ENCODE measurements at regions of chr11 and their contacts with region 1.

Region 1: GRCh38 chr11:4626207-4627099 is 10.8 kb upstream of the OR51D1 start:
- DNase-seq: peak; percentile 73 to 83
- H3K4me3 ChIP-seq: no peak overlapping the region
- H3K4me3 Mint-ChIP-seq: no peak overlapping the region
- H3K27ac Mint-ChIP-seq: no peak overlapping the region
- H3K4me1 ChIP-seq: no peaks in the 10 kb centered on the region
- H3K4me1 Mint-ChIP-seq: peaks cover 6% of the 10 kb centered on the region
- H3K27me3 ChIP-seq: no peaks in the 10 kb centered on the region; the same call in 1 of the 2 replicates
- H3K27me3 Mint-ChIP-seq: peaks cover 13% of the 10 kb centered on the region
- CTCF ChIP-seq: peak; percentile 73 to 79

Region 2: DNA sequence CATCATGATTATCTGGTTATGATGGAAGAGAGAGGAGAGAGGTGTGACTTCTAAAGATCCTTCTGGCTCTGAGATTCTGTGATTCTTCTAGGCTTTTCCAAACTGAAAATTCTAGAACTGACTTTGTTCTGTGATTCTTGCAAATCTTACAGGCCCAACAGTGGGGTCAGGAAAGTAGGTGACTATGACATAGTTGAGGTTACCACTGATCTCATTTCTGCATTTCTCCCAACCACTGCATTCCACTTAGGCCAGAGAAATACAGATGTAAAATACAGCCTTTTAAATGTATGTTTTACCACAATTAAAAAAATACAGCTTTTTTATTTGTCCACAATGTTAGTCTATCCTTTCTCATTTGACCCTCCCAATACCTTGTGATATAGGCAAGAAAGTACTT is 687.2 kb before region 1 on chr11:
- CTCF ChIA-PET with region 1: no interaction called
- POLR2A ChIA-PET with region 1: no interaction called
- intact Hi-C with region 1: no loop called
- DNase-seq: no peak
- H3K4me3 ChIP-seq: no peak overlapping the region
- H3K4me3 Mint-ChIP-seq: no peak overlapping the region
- H3K27ac Mint-ChIP-seq: no peak overlapping the region
- H3K4me1 ChIP-seq: peaks cover 16% of the 10 kb centered on the region
- H3K4me1 Mint-ChIP-seq: peaks cover 7% of the 10 kb centered on the region
- H3K27me3 ChIP-seq: no peaks in the 10 kb centered on the region
- H3K27me3 Mint-ChIP-seq: no peaks in the 10 kb centered on the region
- CTCF ChIP-seq: no peak

Region 3: DNA sequence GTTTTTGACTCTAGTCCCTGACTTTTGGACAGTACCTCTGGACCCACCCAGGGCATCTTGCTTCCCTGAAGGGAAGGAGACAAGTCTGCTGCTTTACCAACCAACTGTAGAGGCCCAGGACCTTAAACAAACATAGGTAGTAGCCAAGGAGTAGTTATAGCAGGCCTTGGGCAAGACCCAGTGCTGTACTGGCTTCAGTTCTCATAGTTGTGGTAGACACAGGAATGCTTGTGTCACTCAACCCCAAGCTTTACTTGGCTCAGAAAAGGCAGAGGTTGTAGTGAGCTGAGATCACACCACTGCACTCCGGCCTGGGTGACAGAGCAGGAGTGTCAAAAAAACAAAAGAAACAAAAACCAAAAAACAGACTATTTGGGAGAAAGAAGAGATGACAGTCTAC is 102.8 kb before region 1 on chr11:
- CTCF ChIA-PET with region 1: no interaction called
- POLR2A ChIA-PET with region 1: no interaction called
- intact Hi-C with region 1: no loop called
- DNase-seq: no peak
- H3K4me3 ChIP-seq: no peak overlapping the region
- H3K4me3 Mint-ChIP-seq: no peak overlapping the region
- H3K27ac Mint-ChIP-seq: no peak overlapping the region
- H3K4me1 ChIP-seq: no peaks in the 10 kb centered on the region
- H3K4me1 Mint-ChIP-seq: no peaks in the 10 kb centered on the region
- H3K27me3 ChIP-seq: no peaks in the 10 kb centered on the region
- H3K27me3 Mint-ChIP-seq: peaks cover 14% of the 10 kb centered on the region
- CTCF ChIP-seq: no peak

Region 4: GRCh38 chr11:4826425-4826824 is 200.0 kb after region 1 on chr11:
- CTCF ChIA-PET with region 1: no interaction called
- POLR2A ChIA-PET with region 1: no interaction called
- intact Hi-C with region 1: loop called (anchors 2 kb)
- DNase-seq: peak in 1 of 2 experiments; percentile 4
- H3K4me3 ChIP-seq: no peak overlapping the region
- H3K4me3 Mint-ChIP-seq: no peak overlapping the region
- H3K27ac Mint-ChIP-seq: no peak overlapping the region
- H3K4me1 ChIP-seq: no peaks in the 10 kb centered on the region
- H3K4me1 Mint-ChIP-seq: no peaks in the 10 kb centered on the region
- H3K27me3 ChIP-seq: no peaks in the 10 kb centered on the region; the same call in 1 of the 2 replicates
- H3K27me3 Mint-ChIP-seq: peaks cover under 1% of the 10 kb centered on the region
- CTCF ChIP-seq: peak; percentile 15 to 24

Region 5: DNA sequence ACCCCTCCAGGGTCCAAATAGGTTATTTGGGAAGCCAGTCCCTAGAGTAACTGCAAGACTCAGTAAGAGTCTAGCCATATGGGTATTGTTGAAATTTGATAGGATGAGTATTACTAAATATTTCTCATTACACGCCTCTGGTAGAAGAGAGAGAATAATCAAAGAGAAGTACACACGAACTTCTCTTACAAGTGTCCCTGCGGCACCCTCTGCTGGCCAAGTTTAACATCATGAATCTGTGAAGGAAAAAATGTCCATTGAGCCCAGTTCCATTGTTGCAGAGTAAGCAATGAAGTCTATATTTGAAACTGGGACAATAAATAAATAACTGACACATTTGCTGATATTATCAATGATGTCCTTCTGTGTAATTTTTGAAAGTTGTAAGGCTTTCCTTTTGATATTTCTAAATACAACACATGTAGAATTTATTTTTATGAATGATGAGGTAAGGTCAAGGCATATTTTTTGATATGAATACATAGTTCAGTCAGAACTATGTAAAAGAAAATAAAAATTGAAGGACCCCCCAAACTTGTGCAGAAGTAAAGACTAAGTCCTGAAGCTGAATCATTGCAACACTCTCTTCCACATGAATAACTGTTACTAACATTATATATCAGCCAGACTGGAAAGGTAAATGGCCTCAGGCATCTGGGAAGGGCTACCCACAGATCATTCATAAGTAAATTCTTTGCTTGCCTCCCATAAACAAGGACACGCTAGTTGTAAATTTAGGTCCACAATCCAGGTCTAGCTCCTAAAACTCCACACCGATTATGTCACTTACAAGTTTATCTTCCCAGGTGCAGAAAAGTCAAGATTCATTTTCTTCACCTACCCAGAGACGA is 378.2 kb after region 1 on chr11:
- CTCF ChIA-PET with region 1: no interaction called
- POLR2A ChIA-PET with region 1: no interaction called
- intact Hi-C with region 1: loop called (anchors 1 kb)
- DNase-seq: peak in 1 of 2 experiments; percentile 58
- H3K4me3 ChIP-seq: no peak overlapping the region
- H3K4me3 Mint-ChIP-seq: no peak overlapping the region
- H3K27ac Mint-ChIP-seq: no peak overlapping the region
- H3K4me1 ChIP-seq: no peaks in the 10 kb centered on the region
- H3K4me1 Mint-ChIP-seq: no peaks in the 10 kb centered on the region
- H3K27me3 ChIP-seq: no peaks in the 10 kb centered on the region
- H3K27me3 Mint-ChIP-seq: peaks cover 6% of the 10 kb centered on the region
- CTCF ChIP-seq: peak; percentile 72 to 78

Region 6: GRCh38 chr11:5380740-5381342 is 754.4 kb after region 1 on chr11:
- CTCF ChIA-PET with region 1: no interaction called
- POLR2A ChIA-PET with region 1: no interaction called
- intact Hi-C with region 1: loop called (anchors 1 kb)
- DNase-seq: peak; percentile 71 to 73
- H3K4me3 ChIP-seq: no peak overlapping the region
- H3K4me3 Mint-ChIP-seq: no peak overlapping the region
- H3K27ac Mint-ChIP-seq: no peak overlapping the region
- H3K4me1 ChIP-seq: no peaks in the 10 kb centered on the region
- H3K4me1 Mint-ChIP-seq: no peaks in the 10 kb centered on the region
- H3K27me3 ChIP-seq: no peaks in the 10 kb centered on the region
- H3K27me3 Mint-ChIP-seq: peaks cover 6% of the 10 kb centered on the region
- CTCF ChIP-seq: peak; percentile 78 to 92

Region 7: GRCh38 chr11:5691964-5692361 is 1065.5 kb after region 1 on chr11:
- CTCF ChIA-PET with region 1: no interaction called
- POLR2A ChIA-PET with region 1: no interaction called
- intact Hi-C with region 1: no loop called
- DNase-seq: no peak
- H3K4me3 ChIP-seq: no peak overlapping the region
- H3K4me3 Mint-ChIP-seq: no peak overlapping the region
- H3K27ac Mint-ChIP-seq: no peak overlapping the region
- H3K4me1 ChIP-seq: peaks cover 20% of the 10 kb centered on the region
- H3K4me1 Mint-ChIP-seq: peaks cover 16% of the 10 kb centered on the region
- H3K27me3 ChIP-seq: no peaks in the 10 kb centered on the region
- H3K27me3 Mint-ChIP-seq: peaks cover 5% of the 10 kb centered on the region
- CTCF ChIP-seq: no peak

Measured in Caco-2 (cell line).